ENCODE measurements at regions of chr15 and their contacts with region 1.

Region 1: GRCh38 chr15:100565591-100565990 is 36.4 kb downstream of the LINS1 start:
- DNase-seq: no peak
- H3K4me3 ChIP-seq: no peak overlapping the region
- H3K27ac ChIP-seq: peak overlapping the region in 3 of 4 donors; percentile 17 to 52 (median 38)
- H3K4me1 ChIP-seq: peaks cover 3 to 42% (median 7%) of the 10 kb centered on the region in 3 donors
- H3K27me3 ChIP-seq: no peaks in the 10 kb centered on the region
- CTCF ChIP-seq: no peak
- POLR2A ChIP-seq: no peak

Region 2: DNA sequence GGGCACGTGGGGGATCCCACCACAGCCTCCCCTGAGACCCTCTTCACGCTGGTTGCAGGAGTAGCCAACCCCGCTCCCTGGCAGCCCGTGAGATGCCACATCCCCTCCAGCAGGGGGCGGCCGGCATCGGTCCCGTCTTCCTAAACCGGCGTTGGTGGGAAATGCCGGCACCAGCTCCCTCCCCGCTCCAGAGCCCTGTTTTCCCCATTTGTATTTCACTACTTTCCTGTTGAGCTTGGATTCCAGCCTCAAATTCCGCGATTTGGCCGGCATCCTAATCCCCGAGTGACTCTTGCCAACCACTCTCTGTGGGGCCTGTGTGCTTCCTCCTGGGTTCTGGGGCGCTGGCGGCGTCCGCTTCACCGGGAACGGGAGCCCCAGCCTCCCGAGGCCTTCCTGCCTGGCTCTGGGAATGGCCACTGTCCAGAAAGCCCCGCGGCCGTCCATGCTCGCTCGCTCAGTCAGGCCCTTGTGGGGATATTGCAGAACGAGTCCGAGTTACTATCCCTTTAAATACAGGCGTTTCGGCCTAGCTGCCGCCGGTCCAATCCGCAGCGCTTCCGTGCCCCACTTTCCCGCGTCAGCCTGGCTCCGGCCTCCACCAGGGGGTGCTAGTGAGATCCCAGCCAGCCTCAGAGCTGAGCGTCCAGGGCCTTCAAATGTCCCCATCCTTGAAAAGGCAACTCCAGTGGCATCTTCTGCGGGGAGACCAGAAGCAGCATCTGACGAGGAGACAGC is 215.7 kb before region 1 on chr15:
- intact Hi-C with region 1: loop called (anchors 10 kb)
- DNase-seq: peak; percentile 41
- H3K4me3 ChIP-seq: peak overlapping the region; percentile 69 to 93 (median 77)
- H3K27ac ChIP-seq: peak overlapping the region; percentile 92 to 99 (median 96)
- H3K4me1 ChIP-seq: peaks cover 0 to 29% (median 6%) of the 10 kb centered on the region in 3 donors
- H3K27me3 ChIP-seq: no peaks in the 10 kb centered on the region
- CTCF ChIP-seq: peak in 5 of 6 experiments; percentile 73 to 97 (median 94)
- POLR2A ChIP-seq: peak in 1 of 4 donors; percentile 38